Vagina (tissue), 2 donors: ENCODE measurements at regions of chr3 and their contacts with region 1.

Region 1: GRCh38 chr3:125767641-125768040 is 172.3 kb upstream of the OSBPL11 start:
- DNase-seq: no peak
- H3K4me3 ChIP-seq: no peak overlapping the region
- H3K27ac ChIP-seq: no peak overlapping the region
- H3K4me1 ChIP-seq: peaks cover 8% of the 10 kb centered on the region
- H3K27me3 ChIP-seq: no peaks in the 10 kb centered on the region
- CTCF ChIP-seq: no peak
- POLR2A ChIP-seq: no peak

Region 2: GRCh38 chr3:125715651-125716050 is 52.0 kb before region 1 on chr3:
- intact Hi-C with region 1: no loop called
- DNase-seq: no peak
- H3K4me3 ChIP-seq: no peak overlapping the region
- H3K27ac ChIP-seq: no peak overlapping the region
- H3K4me1 ChIP-seq: no peaks in the 10 kb centered on the region
- H3K27me3 ChIP-seq: no peaks in the 10 kb centered on the region
- CTCF ChIP-seq: no peak
- POLR2A ChIP-seq: no peak

Region 3: DNA sequence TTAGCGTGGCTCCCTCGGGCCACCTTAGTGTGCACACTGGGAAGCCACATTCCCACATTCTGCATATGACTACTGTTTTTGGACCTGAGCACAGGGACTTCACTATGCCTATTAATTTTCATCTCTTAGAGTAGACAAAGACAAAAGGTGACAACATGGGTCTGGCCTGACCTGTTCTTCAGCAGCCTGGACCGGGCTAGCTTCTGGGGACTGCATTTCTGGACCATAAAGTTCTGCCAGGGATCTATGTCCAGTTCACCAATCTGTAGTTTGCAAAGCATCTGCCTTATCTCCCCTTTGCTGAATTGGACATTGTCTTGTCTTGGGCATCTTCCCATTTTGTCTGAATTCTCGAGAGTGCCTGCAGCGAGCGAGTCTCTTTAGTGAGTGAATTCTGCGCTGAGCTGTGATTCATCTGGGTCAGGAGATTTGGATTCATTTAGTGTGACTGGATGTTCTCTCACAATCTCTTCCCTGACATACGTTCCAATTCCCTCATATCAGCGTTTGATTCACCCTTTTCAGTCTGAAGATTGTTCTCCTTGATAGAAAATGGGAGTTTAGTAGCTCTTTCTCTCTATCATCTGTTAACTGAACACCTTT is 1103.1 kb after region 1 on chr3:
- intact Hi-C with region 1: loop called (anchors 5 kb)
- DNase-seq: no peak
- H3K4me3 ChIP-seq: no peak overlapping the region
- H3K27ac ChIP-seq: no peak overlapping the region
- H3K4me1 ChIP-seq: no peaks in the 10 kb centered on the region
- H3K27me3 ChIP-seq: no peaks in the 10 kb centered on the region
- CTCF ChIP-seq: no peak
- POLR2A ChIP-seq: no peak